ENCODE measurements at regions of chr12 and their contacts with region 1.

Region 1: GRCh38 chr12:69792533-69792932 is 32.5 kb upstream of the MYRFL start:
- DNase-seq: no peak
- H3K4me3 ChIP-seq: no peak overlapping the region
- H3K27ac ChIP-seq: no peak overlapping the region
- H3K4me1 ChIP-seq: no peaks in the 10 kb centered on the region
- H3K27me3 ChIP-seq: no peaks in the 10 kb centered on the region
- CTCF ChIP-seq: no peak
- POLR2A ChIP-seq: no peak

Region 2: DNA sequence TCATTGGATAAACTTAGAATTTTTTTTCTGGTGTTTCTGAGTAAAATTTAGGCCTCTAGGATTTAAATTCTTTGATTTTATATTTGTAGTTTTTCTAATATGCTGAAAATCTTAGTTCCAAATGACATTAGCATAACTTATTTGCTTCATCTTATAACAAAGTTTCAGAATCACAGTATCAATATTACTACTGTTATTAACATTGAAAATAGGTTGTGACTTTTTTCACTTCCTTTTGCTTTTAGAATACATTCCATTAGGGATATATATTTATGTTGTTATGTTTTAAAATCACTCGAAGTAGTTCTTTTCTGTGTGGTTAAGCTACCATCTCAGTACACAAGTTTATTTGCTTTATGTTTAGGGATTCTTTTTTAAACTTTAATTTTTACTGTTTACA is 41.1 kb before region 1 on chr12:
- CTCF ChIA-PET with region 1: no interaction called
- POLR2A ChIA-PET with region 1: no interaction called
- dilution Hi-C with region 1: no loop called
- intact Hi-C with region 1: loop called (anchors 1 kb)
- DNase-seq: no peak
- H3K4me3 ChIP-seq: no peak overlapping the region
- H3K27ac ChIP-seq: no peak overlapping the region
- H3K4me1 ChIP-seq: no peaks in the 10 kb centered on the region
- H3K27me3 ChIP-seq: no peaks in the 10 kb centered on the region
- CTCF ChIP-seq: no peak
- POLR2A ChIP-seq: no peak

Region 3: DNA sequence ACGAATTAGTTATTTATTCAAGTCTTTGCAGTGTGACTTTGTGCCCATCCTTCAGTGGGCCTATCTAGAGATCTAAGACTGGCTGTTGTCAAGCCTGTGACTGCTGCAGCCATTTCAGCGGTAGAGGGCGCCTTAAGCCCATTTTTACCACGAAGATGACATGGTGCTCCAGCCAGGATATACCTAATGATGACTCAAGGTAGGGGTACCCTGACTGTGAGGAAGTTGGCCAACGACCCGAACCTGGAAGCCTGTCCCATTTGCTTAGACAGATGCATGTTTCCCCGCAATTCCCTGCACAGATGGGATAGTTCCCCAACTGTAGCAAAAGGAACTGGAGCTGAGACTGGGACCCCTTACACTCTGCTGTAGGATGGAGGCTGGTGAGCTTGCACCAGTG is 12.6 kb before region 1 on chr12:
- CTCF ChIA-PET with region 1: interaction called, 12 read pairs
- POLR2A ChIA-PET with region 1: no interaction called
- dilution Hi-C with region 1: no loop called
- intact Hi-C with region 1: no loop called
- DNase-seq: peak; percentile 67
- H3K4me3 ChIP-seq: no peak overlapping the region
- H3K27ac ChIP-seq: no peak overlapping the region
- H3K4me1 ChIP-seq: no peaks in the 10 kb centered on the region
- H3K27me3 ChIP-seq: no peaks in the 10 kb centered on the region
- CTCF ChIP-seq: peak; percentile 58 to 73
- POLR2A ChIP-seq: no peak

Measured in endothelial cell of umbilical vein (primary cell).